ENCODE measurements at regions of chr15 and their contacts with region 1.

Region 1: GRCh38 chr15:40543631-40544294 is 21.1 kb downstream of the CCDC32 start:
- DNase-seq: peak in 1 of 3 donors; percentile 17
- H3K4me3 ChIP-seq: no peak overlapping the region
- H3K4me3 Mint-ChIP-seq: no peak overlapping the region
- H3K27ac ChIP-seq: no peak overlapping the region
- H3K27ac Mint-ChIP-seq: peak overlapping the region in 2 of 7 donors; percentile 28 to 46
- H3K4me1 ChIP-seq: peaks cover 4 to 8% of the 10 kb centered on the region in 2 donors
- H3K4me1 Mint-ChIP-seq: peaks cover 21% of the 10 kb centered on the region
- H3K27me3 ChIP-seq: no peaks in the 10 kb centered on the region
- H3K27me3 Mint-ChIP-seq: peaks cover 0 to 4% (median 0%) of the 10 kb centered on the region in 3 donors
- CTCF ChIP-seq: no peak

Region 2: DNA sequence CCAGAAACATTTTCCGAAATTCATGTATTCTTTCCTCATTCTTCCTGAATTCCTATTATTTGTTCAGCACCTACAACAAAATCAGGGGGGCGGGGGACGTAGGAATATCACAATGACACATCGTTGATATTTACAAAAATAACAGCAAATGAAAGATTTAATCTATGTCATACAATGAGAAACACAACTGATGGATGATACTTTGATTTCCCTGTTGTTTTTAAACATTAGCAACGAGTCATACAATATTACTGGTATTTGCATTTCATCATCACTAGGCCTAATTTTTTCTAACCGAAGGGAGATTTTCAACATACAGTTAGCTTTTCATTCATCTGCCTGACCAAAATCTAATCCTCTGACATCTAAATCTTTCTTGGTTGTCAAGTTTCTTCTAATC is 617.6 kb after region 1 on chr15:
- intact Hi-C with region 1: loop called in 1 of 2 experiments (anchors 5 kb)
- DNase-seq: no peak
- H3K4me3 ChIP-seq: no peak overlapping the region
- H3K4me3 Mint-ChIP-seq: no peak overlapping the region
- H3K27ac ChIP-seq: no peak overlapping the region
- H3K27ac Mint-ChIP-seq: no peak overlapping the region
- H3K4me1 ChIP-seq: no peaks in the 10 kb centered on the region
- H3K4me1 Mint-ChIP-seq: peaks cover 5% of the 10 kb centered on the region
- H3K27me3 ChIP-seq: no peaks in the 10 kb centered on the region
- H3K27me3 Mint-ChIP-seq: peaks cover under 1 to 4% (median 3%) of the 10 kb centered on the region in 3 donors
- CTCF ChIP-seq: no peak